A549 (cell line): ENCODE measurements at regions of chr20 and their contacts with region 1.

Region 1: DNA sequence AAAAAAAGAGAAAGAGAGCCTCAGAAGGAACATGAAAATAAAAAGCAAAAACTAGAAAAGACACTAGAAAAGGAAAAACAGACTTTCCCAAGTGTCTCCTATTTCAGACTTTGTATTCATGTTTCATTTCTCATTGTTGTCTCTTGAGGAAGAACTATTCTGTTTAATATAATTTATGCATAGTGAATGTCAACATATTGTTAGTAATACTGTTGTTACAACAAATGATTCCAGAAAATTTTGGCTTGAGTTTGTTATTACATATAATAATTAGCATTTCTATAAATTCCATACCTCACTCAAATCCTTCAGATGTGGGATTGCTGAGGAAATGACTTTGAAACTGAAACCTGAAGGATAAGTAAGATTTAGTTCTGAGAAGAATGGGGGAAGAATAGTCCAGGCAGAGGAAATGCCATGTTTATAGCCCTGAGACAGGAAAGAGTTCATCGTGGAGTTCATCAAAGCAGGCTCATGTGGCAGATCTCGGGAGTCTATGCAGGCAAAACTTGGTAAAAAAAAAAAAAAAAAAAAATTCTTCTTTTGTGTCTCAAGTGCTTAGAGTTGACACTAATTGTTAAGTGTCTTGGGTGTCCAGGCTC is 53.1 kb upstream of the EIF2S2 start:
- DNase-seq: no peak
- ATAC-seq: no peak; a peak in 1 of 6 replicates
- H3K4me3 ChIP-seq: no peak overlapping the region
- H3K27ac ChIP-seq: no peak overlapping the region
- H3K4me1 ChIP-seq: no peaks in the 10 kb centered on the region
- CTCF ChIP-seq: no peak
- EP300 ChIP-seq: no peak
- POLR2A ChIP-seq: no peak
- RAD21 ChIP-seq: no peak

Region 2: GRCh38 chr20:34141294-34141693 is 23.8 kb before region 1 on chr20:
- CTCF ChIA-PET with region 1: no interaction called
- POLR2A ChIA-PET with region 1: no interaction called
- DNase-seq: no peak
- ATAC-seq: no peak
- H3K4me3 ChIP-seq: no peak overlapping the region
- H3K27ac ChIP-seq: no peak overlapping the region
- H3K4me1 ChIP-seq: no peaks in the 10 kb centered on the region
- CTCF ChIP-seq: no peak
- EP300 ChIP-seq: no peak
- POLR2A ChIP-seq: no peak
- RAD21 ChIP-seq: no peak

Region 3: GRCh38 chr20:34452281-34452982 is 287.3 kb after region 1 on chr20:
- CTCF ChIA-PET with region 1: no interaction called
- POLR2A ChIA-PET with region 1: interaction called, 12 read pairs
- DNase-seq: no peak
- ATAC-seq: no peak
- H3K4me3 ChIP-seq: no peak overlapping the region
- H3K27ac ChIP-seq: no peak overlapping the region
- H3K4me1 ChIP-seq: no peaks in the 10 kb centered on the region
- CTCF ChIP-seq: no peak
- EP300 ChIP-seq: no peak
- POLR2A ChIP-seq: no peak
- RAD21 ChIP-seq: no peak